ENCODE measurements at regions of chr20 and their contacts with region 1.

Region 1: GRCh38 chr20:18137412-18138265 is at the starts of genes KAT14 and PET117:
- H3K4me3 Mint-ChIP-seq: peak within 1 kb of the TSS; percentile 88
- H3K27ac Mint-ChIP-seq: peak within 1 kb of the TSS; percentile 94
- H3K4me1 Mint-ChIP-seq: peaks cover 16% of the 10 kb centered on the region
- H3K27me3 Mint-ChIP-seq: no peaks in the 10 kb centered on the region

Region 2: GRCh38 chr20:16729565-16730456 is 1407.8 kb before region 1 on chr20 and contains the start of gene SNRPB2:
- intact Hi-C with region 1: loop called (anchors 10 kb)
- H3K4me3 Mint-ChIP-seq: peak within 1 kb of the TSS; percentile 97
- H3K27ac Mint-ChIP-seq: peak within 1 kb of the TSS; percentile 99
- H3K4me1 Mint-ChIP-seq: peaks cover 26% of the 10 kb centered on the region
- H3K27me3 Mint-ChIP-seq: peaks cover 36% of the 10 kb centered on the region

Region 3: DNA sequence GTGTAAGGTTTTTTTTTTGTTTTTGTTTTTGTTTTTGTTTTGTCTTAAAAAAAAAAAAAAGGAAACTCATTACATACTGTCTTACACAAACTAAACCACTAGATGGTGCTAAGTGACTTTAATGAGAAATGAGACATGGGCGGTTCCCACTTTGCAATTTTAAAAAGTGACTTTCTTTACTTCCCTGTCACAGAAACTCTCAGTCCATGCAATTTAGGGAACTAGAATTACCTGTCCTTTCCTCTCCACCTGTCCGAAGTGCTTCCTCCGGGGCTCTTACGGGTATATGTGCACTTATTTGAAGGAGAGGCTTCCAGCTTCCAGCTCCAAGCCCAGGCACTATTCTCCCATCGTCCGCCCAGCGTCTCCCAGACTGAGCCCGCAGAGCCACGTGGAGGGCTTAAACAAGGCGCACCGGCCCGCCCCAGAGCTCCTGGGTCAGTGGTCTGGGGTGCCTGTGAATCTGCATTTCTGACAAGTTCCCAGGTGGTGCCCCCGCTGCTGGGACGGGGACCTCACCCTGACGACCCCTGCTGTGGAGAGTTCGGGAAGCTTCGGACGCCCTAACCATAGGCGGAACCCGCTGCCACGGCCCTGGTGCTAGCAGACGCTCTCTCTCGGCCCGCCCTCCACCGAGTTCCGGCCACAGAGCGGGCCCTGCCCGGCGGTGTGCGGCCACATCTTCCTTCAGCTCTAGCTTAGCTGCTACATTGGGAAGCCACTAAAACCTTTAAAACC is 632.6 kb before region 1 on chr20:
- intact Hi-C with region 1: loop called (anchors 5 kb)
- H3K4me3 Mint-ChIP-seq: peak overlapping the region; percentile 79
- H3K27ac Mint-ChIP-seq: peak overlapping the region; percentile 68
- H3K4me1 Mint-ChIP-seq: peaks cover 21% of the 10 kb centered on the region
- H3K27me3 Mint-ChIP-seq: peaks cover 7% of the 10 kb centered on the region

Region 4: DNA sequence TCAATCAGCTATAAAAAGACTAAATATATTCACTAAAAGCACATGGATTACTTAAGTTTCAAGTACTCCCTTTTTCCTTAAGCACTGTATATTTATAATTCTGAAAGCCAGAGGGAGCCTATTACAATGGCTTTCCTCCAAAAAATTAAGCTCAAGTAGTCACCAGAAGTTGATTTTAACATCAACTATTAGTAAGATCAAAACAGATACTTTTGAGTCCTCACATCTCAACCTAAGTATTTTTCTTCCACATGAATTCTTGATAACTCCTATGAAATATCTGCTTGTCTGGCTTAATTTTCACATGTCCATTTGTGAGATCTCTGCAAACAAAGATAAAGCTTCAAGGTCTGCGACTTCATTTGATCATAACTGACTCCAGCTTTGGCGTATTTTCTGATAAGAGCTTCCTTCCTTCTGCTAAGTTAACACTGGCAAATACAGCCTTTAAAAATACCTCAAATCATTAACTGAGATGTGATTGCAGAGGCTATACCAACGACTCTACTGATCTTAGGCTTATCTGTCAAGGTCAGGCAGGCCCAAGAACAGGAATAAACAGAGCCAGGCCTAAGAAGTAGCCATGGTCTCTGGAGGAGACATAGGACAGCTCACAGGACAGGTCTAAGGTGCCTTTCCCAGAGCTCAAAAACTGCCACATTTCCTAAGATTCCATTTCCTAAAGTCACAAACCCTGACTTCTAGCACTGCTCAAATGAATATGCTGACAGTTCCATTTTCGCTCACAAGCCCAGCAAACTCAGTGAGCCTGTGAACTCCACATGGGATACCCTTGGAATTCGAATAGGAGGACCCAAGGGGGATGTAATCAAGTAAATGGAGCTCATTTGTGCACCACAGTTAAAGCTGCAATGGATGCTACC is 179.0 kb before region 1 on chr20:
- intact Hi-C with region 1: loop called (anchors 5 kb)
- H3K4me3 Mint-ChIP-seq: no peak overlapping the region
- H3K27ac Mint-ChIP-seq: peak overlapping the region; percentile 98
- H3K4me1 Mint-ChIP-seq: peaks cover 78% of the 10 kb centered on the region
- H3K27me3 Mint-ChIP-seq: no peaks in the 10 kb centered on the region

Region 5: GRCh38 chr20:18041456-18041855 is 96.2 kb before region 1 on chr20:
- intact Hi-C with region 1: no loop called
- H3K4me3 Mint-ChIP-seq: no peak overlapping the region
- H3K27ac Mint-ChIP-seq: no peak overlapping the region
- H3K4me1 Mint-ChIP-seq: no peaks in the 10 kb centered on the region
- H3K27me3 Mint-ChIP-seq: peaks cover 30% of the 10 kb centered on the region

Region 6: GRCh38 chr20:18052856-18053255 is 84.8 kb before region 1 on chr20:
- intact Hi-C with region 1: loop called (anchors 5 kb)
- H3K4me3 Mint-ChIP-seq: no peak overlapping the region
- H3K27ac Mint-ChIP-seq: no peak overlapping the region
- H3K4me1 Mint-ChIP-seq: peaks cover 52% of the 10 kb centered on the region
- H3K27me3 Mint-ChIP-seq: peaks cover 42% of the 10 kb centered on the region

Region 7: GRCh38 chr20:18197382-18198131 is 59.9 kb after region 1 on chr20:
- intact Hi-C with region 1: no loop called
- H3K4me3 Mint-ChIP-seq: no peak overlapping the region
- H3K27ac Mint-ChIP-seq: no peak overlapping the region
- H3K4me1 Mint-ChIP-seq: no peaks in the 10 kb centered on the region
- H3K27me3 Mint-ChIP-seq: no peaks in the 10 kb centered on the region